ENCODE measurements at regions of chr2 and their contacts with region 1.

Region 1: DNA sequence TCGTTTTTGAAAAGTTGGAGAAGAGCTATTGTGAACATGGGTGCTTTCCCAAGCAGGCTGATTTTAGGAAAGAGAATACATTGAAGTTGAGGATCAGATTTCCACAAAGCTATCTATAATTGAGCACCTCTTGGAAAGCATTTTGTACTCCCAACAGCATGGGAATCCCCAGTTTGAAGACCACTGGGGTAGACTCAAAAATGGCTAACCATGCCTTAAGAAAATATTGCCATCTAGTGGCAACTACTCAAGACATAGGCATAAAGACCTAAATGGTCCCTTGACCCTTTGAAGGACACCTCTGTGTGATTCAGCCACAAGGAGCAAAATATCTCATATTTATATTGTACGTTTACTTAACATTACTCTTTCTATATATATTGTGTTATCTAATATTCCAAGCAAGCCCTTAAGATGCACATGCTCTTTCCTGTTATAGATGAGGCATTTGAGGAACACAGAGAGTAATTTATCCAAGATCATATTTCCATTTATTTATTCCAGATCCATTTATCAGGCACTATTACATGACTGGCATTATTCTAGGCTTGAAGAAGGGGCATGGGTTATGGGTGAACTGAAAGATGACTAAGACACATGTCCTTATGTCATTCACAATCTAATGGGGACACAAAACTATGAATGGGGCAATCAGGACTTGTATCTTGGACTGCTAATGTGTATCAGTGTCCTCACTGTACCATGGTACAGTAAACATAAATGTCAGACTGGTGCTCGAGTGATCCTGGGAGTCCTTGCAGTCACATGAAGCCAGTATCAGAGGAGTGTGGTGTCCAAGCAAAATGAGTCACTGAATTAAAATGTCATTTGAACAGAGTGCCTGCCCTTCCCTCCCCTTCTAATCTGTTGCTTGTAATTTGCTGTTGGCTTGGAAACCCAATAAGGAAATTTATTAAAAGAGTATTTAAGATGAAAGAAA is 121.0 kb upstream of the XPO1 start:
- DNase-seq: no peak
- ATAC-seq: peak; percentile 39
- H3K4me3 Mint-ChIP-seq: no peak overlapping the region
- H3K27ac Mint-ChIP-seq: no peak overlapping the region
- H3K4me1 Mint-ChIP-seq: peaks cover 4% of the 10 kb centered on the region
- H3K27me3 Mint-ChIP-seq: no peaks in the 10 kb centered on the region

Region 2: DNA sequence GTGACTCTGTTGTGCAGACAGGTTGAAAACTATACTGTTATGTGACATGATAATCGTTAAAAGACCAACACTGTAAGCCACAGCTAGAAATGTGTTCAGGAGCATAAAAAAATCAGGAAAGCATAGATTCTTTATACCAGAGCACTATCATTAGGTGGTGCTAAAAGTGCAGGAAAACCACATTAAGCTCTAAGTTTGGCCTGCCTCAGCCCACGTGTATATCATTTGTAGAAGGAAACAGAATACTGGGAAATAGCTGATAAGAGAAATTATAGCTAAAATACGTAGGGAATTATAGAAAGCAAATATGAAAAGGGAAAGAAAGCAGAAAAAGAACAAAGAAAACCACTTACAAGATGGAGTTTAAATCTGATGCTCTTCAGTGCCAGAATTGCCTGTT is 523.6 kb before region 1 on chr2:
- CTCF ChIA-PET with region 1: no interaction called
- POLR2A ChIA-PET with region 1: no interaction called
- intact Hi-C with region 1: loop called in 1 of 2 experiments (anchors 10 kb)
- DNase-seq: peak; percentile 9
- ATAC-seq: peak; percentile 51
- H3K4me3 Mint-ChIP-seq: no peak overlapping the region
- H3K27ac Mint-ChIP-seq: no peak overlapping the region
- H3K4me1 Mint-ChIP-seq: no peaks in the 10 kb centered on the region
- H3K27me3 Mint-ChIP-seq: no peaks in the 10 kb centered on the region

Region 3: DNA sequence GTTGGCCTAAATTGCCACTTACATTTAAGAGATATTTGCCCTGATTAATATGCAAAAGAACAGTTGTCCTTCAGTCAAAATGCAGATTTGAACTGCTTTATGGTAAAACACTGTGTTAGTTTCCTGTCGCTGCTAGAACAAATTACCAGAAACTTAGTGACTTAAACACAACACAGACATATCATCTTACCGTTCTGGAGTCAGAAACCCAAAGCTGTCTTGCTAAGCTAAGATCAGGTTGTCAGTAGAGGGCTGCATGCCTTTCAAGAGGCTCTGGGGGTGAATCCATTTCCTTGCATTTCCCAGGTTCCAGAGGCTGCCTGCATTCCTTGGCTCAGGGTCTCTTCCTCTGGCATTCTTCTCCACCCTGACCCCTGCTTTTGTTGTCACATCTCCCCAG is 45.3 kb after region 1 on chr2:
- CTCF ChIA-PET with region 1: no interaction called
- POLR2A ChIA-PET with region 1: no interaction called
- intact Hi-C with region 1: no loop called
- DNase-seq: no peak
- ATAC-seq: no peak
- H3K4me3 Mint-ChIP-seq: no peak overlapping the region
- H3K27ac Mint-ChIP-seq: no peak overlapping the region
- H3K4me1 Mint-ChIP-seq: peaks cover 8% of the 10 kb centered on the region
- H3K27me3 Mint-ChIP-seq: no peaks in the 10 kb centered on the region

Region 4: DNA sequence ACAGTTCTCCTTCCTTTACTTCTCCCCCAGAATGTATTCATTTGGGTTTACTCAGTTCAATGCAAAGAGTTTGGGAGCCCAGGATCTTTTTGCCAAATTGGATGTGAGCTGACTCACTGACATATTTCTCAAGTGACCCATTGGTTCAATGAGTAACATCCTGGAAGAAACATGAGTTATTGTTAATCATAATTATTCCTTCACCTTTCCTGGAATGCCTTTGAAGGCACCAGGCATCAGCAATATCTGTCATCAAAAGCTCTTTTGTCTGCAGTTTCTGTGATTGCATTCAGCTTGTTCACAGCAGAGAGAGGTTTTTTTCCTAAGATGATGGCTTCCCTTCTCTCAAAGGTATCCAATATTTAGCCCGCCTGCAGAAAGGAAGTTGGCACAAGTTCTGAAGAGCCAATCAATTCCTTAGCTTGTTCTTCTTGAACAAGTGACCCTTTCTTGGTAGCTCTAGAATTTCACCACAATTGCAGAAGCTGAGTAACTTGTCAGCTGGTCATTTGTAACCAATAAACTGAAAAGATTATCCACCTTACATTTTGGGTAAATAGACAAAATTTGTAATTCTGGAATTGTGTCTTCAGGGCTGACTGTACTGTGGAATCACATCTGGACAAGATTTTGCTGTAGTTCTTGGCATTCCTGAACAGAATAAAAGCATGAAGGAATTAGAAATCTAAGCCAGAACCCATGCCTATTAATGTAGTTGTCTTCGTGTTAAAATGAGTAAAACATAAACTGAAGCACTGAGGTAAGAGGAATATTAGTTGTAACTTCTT is 919.1 kb after region 1 on chr2:
- CTCF ChIA-PET with region 1: no interaction called
- POLR2A ChIA-PET with region 1: no interaction called
- intact Hi-C with region 1: no loop called
- DNase-seq: no peak
- ATAC-seq: no peak
- H3K4me3 Mint-ChIP-seq: no peak overlapping the region
- H3K27ac Mint-ChIP-seq: no peak overlapping the region
- H3K4me1 Mint-ChIP-seq: no peaks in the 10 kb centered on the region
- H3K27me3 Mint-ChIP-seq: peaks cover 11% of the 10 kb centered on the region

Measured in activated CD4-positive, alpha-beta T cell treated with anti-CD3 and anti-CD28 coated beads for 36 hours (primary cell).